PC-9 (cell line): ENCODE measurements at regions of chr16 and their contacts with region 1.

Region 1: DNA sequence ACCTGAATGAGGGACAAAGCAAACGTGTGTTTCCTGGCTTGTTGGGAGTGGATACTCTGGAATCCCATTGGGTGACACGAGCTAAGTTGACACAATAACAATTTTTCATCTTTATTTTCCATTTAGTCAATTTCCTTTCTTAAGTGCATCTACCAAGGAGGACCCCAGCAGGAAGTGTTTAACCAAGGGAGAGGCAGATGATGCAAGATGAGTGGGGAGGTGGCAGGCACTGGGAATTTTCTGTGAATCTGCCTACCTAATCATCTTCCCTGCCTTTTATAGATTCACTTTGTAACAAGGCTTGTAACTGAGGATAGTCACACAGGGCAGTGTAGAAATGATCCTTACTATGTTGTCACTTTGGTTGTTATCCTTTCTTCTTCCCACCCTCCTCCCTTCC is 317.7 kb upstream of the HSBP1 start:
- DNase-seq: no peak
- H3K4me3 ChIP-seq: no peak overlapping the region
- H3K27ac ChIP-seq: no peak overlapping the region
- H3K4me1 ChIP-seq: no peaks in the 10 kb centered on the region
- H3K27me3 ChIP-seq: peaks cover 17% of the 10 kb centered on the region
- CTCF ChIP-seq: no peak

Region 2: GRCh38 chr16:83285921-83286320 is 204.2 kb before region 1 on chr16:
- CTCF ChIA-PET with region 1: interaction called, 14 read pairs
- POLR2A ChIA-PET with region 1: no interaction called
- intact Hi-C with region 1: no loop called
- DNase-seq: no peak
- H3K4me3 ChIP-seq: no peak overlapping the region
- H3K27ac ChIP-seq: no peak overlapping the region
- H3K4me1 ChIP-seq: no peaks in the 10 kb centered on the region
- H3K27me3 ChIP-seq: peaks cover 15% of the 10 kb centered on the region
- CTCF ChIP-seq: no peak

Region 3: GRCh38 chr16:83581082-83581481 is 91.0 kb after region 1 on chr16:
- CTCF ChIA-PET with region 1: no interaction called
- POLR2A ChIA-PET with region 1: no interaction called
- intact Hi-C with region 1: no loop called
- DNase-seq: no peak
- H3K4me3 ChIP-seq: no peak overlapping the region
- H3K27ac ChIP-seq: no peak overlapping the region
- H3K4me1 ChIP-seq: no peaks in the 10 kb centered on the region
- H3K27me3 ChIP-seq: peaks cover 38% of the 10 kb centered on the region
- CTCF ChIP-seq: no peak